SK-N-SH (cell line): ENCODE measurements at regions of chr3 and their contacts with region 1.

Region 1: GRCh38 chr3:193457526-193457925 is 79.0 kb upstream of the ATP13A5 start:
- DNase-seq: no peak
- H3K4me3 ChIP-seq: no peak overlapping the region
- H3K27ac ChIP-seq: no peak overlapping the region
- H3K4me1 ChIP-seq: no peaks in the 10 kb centered on the region
- H3K27me3 ChIP-seq: no peaks in the 10 kb centered on the region; the same call in 1 of the 2 replicates
- CTCF ChIP-seq: no peak
- EP300 ChIP-seq: no peak
- RAD21 ChIP-seq: no peak

Region 2: DNA sequence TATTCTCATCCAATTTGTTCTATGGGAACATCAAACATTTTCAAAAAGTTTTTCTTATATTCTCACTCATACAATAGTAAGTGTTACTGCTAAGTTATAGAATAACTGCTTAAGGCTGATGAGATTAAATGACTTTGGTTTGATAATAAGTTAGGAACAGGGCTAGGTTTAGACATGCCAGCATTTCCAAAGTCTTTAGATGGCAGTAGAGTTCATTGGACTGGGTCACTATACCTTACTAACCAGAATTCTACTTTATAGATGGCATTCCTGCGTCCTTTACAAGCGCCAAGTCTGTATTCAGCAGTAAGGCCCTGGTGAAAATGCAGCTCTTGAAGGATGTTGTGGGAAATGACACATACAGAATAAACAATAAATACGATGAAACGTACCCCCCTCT is 194.8 kb before region 1 on chr3:
- CTCF ChIA-PET with region 1: no interaction called
- POLR2A ChIA-PET with region 1: no interaction called
- DNase-seq: no peak
- H3K4me3 ChIP-seq: no peak overlapping the region
- H3K27ac ChIP-seq: no peak overlapping the region
- H3K4me1 ChIP-seq: no peaks in the 10 kb centered on the region
- H3K27me3 ChIP-seq: no peaks in the 10 kb centered on the region
- CTCF ChIP-seq: no peak
- EP300 ChIP-seq: no peak
- RAD21 ChIP-seq: no peak

Region 3: GRCh38 chr3:193481436-193481835 is 23.9 kb after region 1 on chr3:
- CTCF ChIA-PET with region 1: no interaction called
- POLR2A ChIA-PET with region 1: no interaction called
- DNase-seq: no peak
- H3K4me3 ChIP-seq: no peak overlapping the region
- H3K27ac ChIP-seq: no peak overlapping the region
- H3K4me1 ChIP-seq: no peaks in the 10 kb centered on the region
- H3K27me3 ChIP-seq: no peaks in the 10 kb centered on the region
- CTCF ChIP-seq: no peak
- EP300 ChIP-seq: no peak
- RAD21 ChIP-seq: no peak

Region 4: GRCh38 chr3:193572426-193572908 is 114.9 kb after region 1 on chr3:
- CTCF ChIA-PET with region 1: interaction called, 28 read pairs
- POLR2A ChIA-PET with region 1: no interaction called
- DNase-seq: peak; percentile 61
- H3K4me3 ChIP-seq: peak overlapping the region in 1 of 2 experiments; percentile 14; a peak in 1 of 4 replicates
- H3K27ac ChIP-seq: no peak overlapping the region
- H3K4me1 ChIP-seq: no peaks in the 10 kb centered on the region
- H3K27me3 ChIP-seq: 0 out of 2 replicates have a peak, but pooled peaks cover 6% of the 10 kb centered on the region
- CTCF ChIP-seq: peak; percentile 89
- EP300 ChIP-seq: no peak
- RAD21 ChIP-seq: peak; percentile 95